ENCODE measurements at regions of chr13 and their contacts with region 1.

Region 1: DNA sequence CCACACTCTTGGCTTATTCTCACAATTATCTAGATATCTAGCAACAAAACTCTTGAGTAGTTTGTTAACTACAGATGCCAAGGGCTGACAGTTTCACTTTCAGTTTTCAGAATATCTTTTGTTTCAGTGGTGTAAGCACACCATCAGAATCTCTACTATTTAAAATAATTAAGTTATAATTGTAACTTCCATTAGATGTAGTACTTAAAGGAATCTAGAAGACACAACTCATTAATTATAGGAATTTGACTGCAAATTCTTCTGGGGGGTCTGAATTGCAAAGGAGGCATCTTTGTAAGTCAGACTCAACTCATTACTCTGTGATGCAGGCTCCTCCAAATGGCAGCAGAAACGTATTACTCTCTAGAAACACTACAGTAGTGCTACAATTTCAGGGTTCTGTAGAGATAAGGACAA is 44.9 kb upstream of the USPL1 start:
- DNase-seq: peak; percentile 39
- ATAC-seq: peak; percentile 46
- H3K4me3 ChIP-seq: peak overlapping the region; percentile 69
- H3K27ac ChIP-seq: no peak overlapping the region
- H3K4me1 ChIP-seq: peaks cover 34% of the 10 kb centered on the region
- H3K27me3 ChIP-seq: no peaks in the 10 kb centered on the region
- CTCF ChIP-seq: peak; percentile 47

Region 2: DNA sequence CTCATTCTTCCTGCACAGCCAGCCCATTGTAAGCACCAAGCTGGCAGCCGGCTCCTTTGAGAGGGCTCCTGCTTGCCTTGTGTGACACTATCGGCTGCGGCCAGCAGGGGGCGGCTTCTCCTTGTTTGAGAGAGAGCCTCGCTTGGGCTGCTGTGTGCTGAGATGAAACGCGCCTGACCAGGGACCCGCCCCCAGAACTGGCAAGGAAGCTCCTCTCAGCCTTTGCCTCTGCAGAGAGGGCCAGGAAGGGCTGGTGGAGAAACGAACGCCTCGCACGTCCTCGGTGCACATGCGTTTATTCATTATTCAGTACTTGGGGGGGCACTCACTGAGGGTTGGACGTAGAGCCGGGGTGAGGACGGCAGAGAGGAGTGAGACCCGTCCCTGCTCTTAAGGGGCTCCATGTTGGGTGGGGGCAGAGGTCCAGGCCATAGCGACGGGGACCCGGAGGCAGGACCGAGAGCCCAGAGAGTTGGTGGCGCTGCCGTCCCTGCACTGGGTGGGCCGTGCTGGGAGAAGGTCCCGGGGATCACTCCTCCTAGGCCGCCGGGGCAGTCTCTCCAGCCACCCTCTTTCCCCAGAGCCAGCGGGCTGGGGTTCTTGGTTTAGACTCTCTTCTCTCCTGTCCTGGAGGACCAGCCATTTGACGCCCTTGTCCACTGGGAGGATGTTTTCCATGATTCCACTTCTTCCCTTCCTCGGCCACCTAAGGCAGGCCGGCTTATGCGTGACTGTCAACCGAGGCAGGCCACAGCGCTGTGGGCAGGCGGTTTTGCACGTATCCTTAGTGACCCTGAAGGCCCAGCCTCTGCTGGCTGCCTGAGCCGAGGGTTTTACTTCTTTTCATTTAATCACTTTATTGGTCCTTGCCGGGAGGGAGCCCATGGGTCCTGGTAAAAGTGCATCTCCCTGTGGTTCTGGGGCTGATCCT is 440.0 kb before region 1 on chr13:
- CTCF ChIA-PET with region 1: no interaction called
- POLR2A ChIA-PET with region 1: no interaction called
- intact Hi-C with region 1: loop called (anchors 10 kb)
- DNase-seq: peak; percentile 88
- ATAC-seq: peak; percentile 89
- H3K4me3 ChIP-seq: no peak overlapping the region
- H3K27ac ChIP-seq: no peak overlapping the region
- H3K4me1 ChIP-seq: peaks cover 7% of the 10 kb centered on the region
- H3K27me3 ChIP-seq: no peaks in the 10 kb centered on the region
- CTCF ChIP-seq: peak; percentile 83

Region 3: GRCh38 chr13:30257468-30258099 is 315.3 kb before region 1 on chr13:
- CTCF ChIA-PET with region 1: no interaction called
- POLR2A ChIA-PET with region 1: no interaction called
- intact Hi-C with region 1: loop called (anchors 10 kb)
- DNase-seq: no peak
- ATAC-seq: peak; percentile 70
- H3K4me3 ChIP-seq: no peak overlapping the region
- H3K27ac ChIP-seq: no peak overlapping the region
- H3K4me1 ChIP-seq: no peaks in the 10 kb centered on the region
- H3K27me3 ChIP-seq: no peaks in the 10 kb centered on the region
- CTCF ChIP-seq: no peak

Region 4: GRCh38 chr13:30422054-30422839 is 150.6 kb before region 1 on chr13 and contains the start of gene UBE2L5:
- CTCF ChIA-PET with region 1: no interaction called
- POLR2A ChIA-PET with region 1: no interaction called
- intact Hi-C with region 1: loop called (anchors 5 kb)
- DNase-seq: peak; percentile 62
- ATAC-seq: peak; percentile 87
- H3K4me3 ChIP-seq: peak within 1 kb of the TSS; percentile 82
- H3K27ac ChIP-seq: peak within 1 kb of the TSS; percentile 42
- H3K4me1 ChIP-seq: peaks cover 16% of the 10 kb centered on the region
- H3K27me3 ChIP-seq: no peaks in the 10 kb centered on the region
- CTCF ChIP-seq: no peak
- total RNA-seq, gene UBE2L5: not detected in 2 replicates

Region 5: DNA sequence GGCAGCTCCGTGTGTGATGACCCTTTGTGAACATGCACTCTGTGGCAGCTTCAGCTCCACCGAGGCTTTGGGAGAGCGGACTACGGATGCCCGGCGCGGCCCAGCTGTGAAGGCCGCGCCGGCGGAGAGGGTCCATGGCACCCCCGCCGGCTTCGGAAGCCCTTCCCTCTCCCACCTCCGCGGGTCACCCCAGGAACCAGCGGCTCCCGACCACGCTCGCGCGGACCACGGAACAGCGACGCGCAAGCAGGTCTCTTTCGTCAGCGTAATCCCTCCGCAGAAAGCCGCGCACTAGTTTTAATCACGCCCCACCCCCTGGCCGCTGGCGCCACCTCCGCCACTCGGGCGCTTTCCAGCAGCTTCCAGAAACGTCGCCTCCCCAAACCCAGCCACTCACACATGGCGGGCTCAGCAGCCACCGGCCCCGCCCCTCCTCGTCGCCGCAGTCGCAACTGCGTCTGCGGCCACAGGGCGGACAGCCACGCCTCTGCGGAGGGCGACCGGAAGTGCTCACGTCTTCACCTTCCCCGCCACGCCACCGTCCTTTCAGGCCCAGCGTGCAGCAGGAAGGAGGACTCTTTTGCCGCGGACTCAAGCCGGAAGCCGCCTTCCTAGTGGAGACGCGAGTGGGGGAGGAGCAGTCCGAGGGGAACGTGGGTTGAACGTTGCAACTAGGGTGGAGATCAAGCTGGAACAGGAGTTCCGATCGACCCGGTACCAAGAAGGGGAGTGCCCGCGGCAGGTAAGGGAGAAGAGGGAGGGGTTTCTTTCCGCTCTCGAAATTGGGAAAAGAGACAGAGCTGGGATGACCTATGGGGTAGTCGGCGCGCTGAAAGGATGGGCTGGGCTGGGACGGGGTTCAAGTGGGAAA is 44.7 kb after region 1 on chr13 and contains the start of gene USPL1:
- CTCF ChIA-PET with region 1: no interaction called
- POLR2A ChIA-PET with region 1: interaction called, 4 read pairs
- intact Hi-C with region 1: loop called (anchors 5 kb)
- DNase-seq: peak; percentile 96
- ATAC-seq: peak; percentile 84
- H3K4me3 ChIP-seq: peak within 1 kb of the TSS; percentile 87
- H3K27ac ChIP-seq: peak within 1 kb of the TSS; percentile 88
- H3K4me1 ChIP-seq: peaks cover 24% of the 10 kb centered on the region
- H3K27me3 ChIP-seq: no peaks in the 10 kb centered on the region
- CTCF ChIP-seq: no peak
- total RNA-seq, gene USPL1: 6.0 and 9.0 TPM in 2 replicates

Region 6: GRCh38 chr13:30802953-30803478 is 230.1 kb after region 1 on chr13:
- CTCF ChIA-PET with region 1: no interaction called
- POLR2A ChIA-PET with region 1: no interaction called
- intact Hi-C with region 1: loop called (anchors 2 kb)
- DNase-seq: peak; percentile 73
- ATAC-seq: peak; percentile 97
- H3K4me3 ChIP-seq: peak overlapping the region; percentile 26; the same call in 1 of the 2 replicates
- H3K27ac ChIP-seq: no peak overlapping the region
- H3K4me1 ChIP-seq: no peaks in the 10 kb centered on the region; the same call in 1 of the 2 replicates
- H3K27me3 ChIP-seq: no peaks in the 10 kb centered on the region
- CTCF ChIP-seq: peak; percentile 89

Measured in PC-3 (cell line).